GM12878 (cell line): ENCODE measurements at regions of chr13 and their contacts with region 1.

Region 1: DNA sequence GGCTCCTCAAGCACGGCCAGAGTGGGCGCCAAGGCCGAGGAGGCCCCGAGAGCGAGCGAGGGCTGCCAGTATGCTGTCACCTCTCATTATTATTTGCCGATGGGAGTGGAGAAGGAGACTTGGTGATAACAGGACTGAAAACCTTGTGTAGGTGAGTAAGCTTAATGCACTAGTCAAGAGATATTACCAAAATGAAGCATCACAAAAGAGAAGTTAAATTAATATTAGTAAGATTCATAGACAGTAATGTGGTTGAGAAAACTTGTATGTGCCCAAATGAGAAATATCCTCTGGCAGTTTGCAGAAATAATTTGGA is 204.5 kb upstream of the SLITRK1 start:
- DNase-seq: no peak
- ATAC-seq: no peak
- H3K4me3 ChIP-seq: no peak overlapping the region
- H3K27ac ChIP-seq: no peak overlapping the region
- H3K4me1 ChIP-seq: no peaks in the 10 kb centered on the region
- H3K27me3 ChIP-seq: no peaks in the 10 kb centered on the region
- CTCF ChIP-seq: no peak
- EP300 ChIP-seq: no peak
- POLR2A ChIP-seq: no peak
- RAD21 ChIP-seq: no peak

Region 2: GRCh38 chr13:84037937-84038462 is 48.8 kb before region 1 on chr13:
- CTCF ChIA-PET with region 1: no interaction called
- POLR2A ChIA-PET with region 1: no interaction called
- RAD21 ChIA-PET with region 1: no interaction called
- SMC1A ChIA-PET with region 1: no interaction called
- in situ Hi-C with region 1: no loop called
- intact Hi-C with region 1: loop called (anchors 1 kb)
- DNase-seq: no peak
- ATAC-seq: no peak
- H3K4me3 ChIP-seq: no peak overlapping the region
- H3K27ac ChIP-seq: no peak overlapping the region
- H3K4me1 ChIP-seq: no peaks in the 10 kb centered on the region
- H3K27me3 ChIP-seq: no peaks in the 10 kb centered on the region
- CTCF ChIP-seq: no peak
- EP300 ChIP-seq: no peak
- POLR2A ChIP-seq: no peak
- RAD21 ChIP-seq: no peak

Region 3: DNA sequence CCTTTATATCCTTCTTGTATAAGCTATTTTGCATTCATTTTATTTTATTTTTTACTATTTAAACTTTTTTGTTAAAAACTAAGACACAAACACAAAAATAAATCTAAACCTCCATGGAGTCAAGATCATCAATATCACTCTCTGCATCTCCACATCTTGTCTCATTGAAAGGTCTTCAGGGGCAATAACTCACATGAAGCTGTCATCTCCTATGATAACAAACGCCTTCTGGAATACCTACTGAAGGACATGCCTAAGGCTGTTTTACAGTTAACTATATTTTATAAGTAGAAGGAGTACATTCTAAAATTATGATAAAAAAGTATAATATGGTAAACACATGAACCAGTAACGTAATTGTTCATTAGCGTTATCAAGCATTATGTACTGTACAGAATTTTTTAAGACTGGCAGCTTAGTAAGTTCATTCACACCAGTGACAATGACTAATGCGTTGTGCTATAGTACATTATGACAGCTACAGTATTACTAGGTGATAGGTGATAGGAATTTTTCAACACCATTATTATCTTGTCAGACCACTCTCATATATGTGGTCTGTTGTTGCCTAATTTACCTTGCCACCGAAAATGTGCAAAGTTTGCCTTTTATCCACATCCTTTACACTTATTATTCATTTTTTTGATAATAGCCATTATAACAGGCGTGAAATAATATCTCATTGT is 186.2 kb after region 1 on chr13:
- CTCF ChIA-PET with region 1: no interaction called
- POLR2A ChIA-PET with region 1: no interaction called
- RAD21 ChIA-PET with region 1: no interaction called
- SMC1A ChIA-PET with region 1: no interaction called
- in situ Hi-C with region 1: no loop called
- intact Hi-C with region 1: no loop called
- DNase-seq: no peak
- ATAC-seq: no peak
- H3K4me3 ChIP-seq: no peak overlapping the region
- H3K27ac ChIP-seq: no peak overlapping the region
- H3K4me1 ChIP-seq: no peaks in the 10 kb centered on the region
- H3K27me3 ChIP-seq: no peaks in the 10 kb centered on the region
- CTCF ChIP-seq: no peak
- EP300 ChIP-seq: no peak
- POLR2A ChIP-seq: no peak
- RAD21 ChIP-seq: no peak